Caco-2 (cell line): ENCODE measurements at regions of chr2 and their contacts with region 1.

Region 1: DNA sequence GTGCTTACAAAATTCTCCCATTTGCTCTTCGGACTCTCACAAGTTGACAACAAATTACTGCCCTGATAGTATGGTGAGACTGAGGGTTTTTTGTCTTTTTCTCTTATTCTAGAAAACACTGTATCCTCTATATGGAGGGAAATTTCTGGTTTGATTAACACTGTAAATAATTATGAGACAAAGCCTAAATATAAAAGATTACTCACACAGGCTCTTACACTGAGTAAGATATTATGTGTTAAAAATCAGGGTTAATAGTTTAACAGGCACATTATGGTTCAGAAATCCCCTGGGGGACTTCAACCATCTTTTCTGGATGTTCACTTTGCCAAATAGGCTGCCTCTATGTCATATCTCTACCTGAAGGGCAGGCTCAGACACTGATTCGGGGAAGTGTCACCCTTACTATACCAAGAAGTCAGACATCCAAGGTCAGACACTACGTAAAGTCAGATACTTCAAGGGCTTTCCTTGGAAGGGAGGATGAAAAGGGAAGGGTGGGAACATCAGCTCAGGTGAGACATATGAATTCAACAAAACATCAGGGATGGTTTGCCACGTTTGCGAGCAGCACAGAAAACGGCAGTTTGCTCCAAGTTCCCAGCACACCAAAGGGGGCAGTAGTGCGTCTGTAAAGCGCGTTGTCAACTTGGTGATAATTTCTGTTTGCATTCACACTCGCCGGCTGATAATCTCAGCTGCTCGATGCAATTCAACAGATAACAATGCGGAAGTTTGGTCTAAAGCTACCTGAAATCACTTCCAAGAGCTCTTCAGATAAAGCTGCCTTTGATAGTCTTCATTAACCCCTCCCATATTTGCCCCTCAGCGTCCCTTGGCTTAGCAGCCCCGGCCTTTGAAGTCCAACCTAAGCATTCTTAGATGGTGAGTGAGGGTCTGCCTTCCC is 972 bp upstream of the RASGRP3 start:
- DNase-seq: peak; percentile 87 to 90
- H3K4me3 ChIP-seq: peak overlapping the region; percentile 50
- H3K4me3 Mint-ChIP-seq: peak overlapping the region; percentile 97
- H3K27ac Mint-ChIP-seq: peak overlapping the region; percentile 96
- H3K4me1 ChIP-seq: peaks cover 35% of the 10 kb centered on the region
- H3K4me1 Mint-ChIP-seq: peaks cover 26% of the 10 kb centered on the region
- H3K27me3 ChIP-seq: no peaks in the 10 kb centered on the region
- H3K27me3 Mint-ChIP-seq: no peaks in the 10 kb centered on the region
- CTCF ChIP-seq: peak; percentile 85 to 91

Region 2: DNA sequence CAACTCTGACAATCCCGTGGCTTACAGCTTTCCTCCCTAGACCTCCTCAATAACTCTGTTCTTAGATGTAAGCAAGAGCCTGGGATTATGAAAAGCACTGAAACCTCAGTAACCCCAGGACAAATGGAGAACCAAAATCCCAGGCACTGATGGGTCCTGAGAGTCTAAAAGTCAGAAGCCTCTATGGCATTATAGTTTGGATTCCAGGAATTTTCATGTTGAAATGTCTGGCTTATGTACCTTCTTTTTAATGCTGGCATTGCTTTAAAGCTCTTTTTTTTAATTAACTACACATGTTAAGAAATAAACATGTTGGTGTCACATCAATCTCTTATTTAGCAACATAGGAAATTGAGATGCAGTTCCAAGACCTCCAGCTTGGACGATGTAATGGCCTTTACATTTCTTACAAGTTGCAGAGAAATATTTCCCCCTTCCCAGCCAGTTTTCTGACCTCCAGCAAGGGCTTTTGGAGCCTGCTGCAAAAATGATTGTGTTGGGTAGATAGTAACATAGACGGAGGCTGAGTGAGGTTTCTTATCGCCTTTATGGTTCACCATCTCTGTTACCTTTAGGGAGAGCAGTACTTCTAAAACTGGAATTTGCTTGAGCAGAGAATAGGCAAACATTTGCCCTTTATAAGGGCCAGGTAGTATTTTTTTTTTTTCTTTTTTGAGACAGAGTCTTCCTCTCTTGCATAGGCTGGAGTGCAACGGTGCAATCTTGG is 83.8 kb before region 1 on chr2:
- CTCF ChIA-PET with region 1: no interaction called
- POLR2A ChIA-PET with region 1: no interaction called
- intact Hi-C with region 1: no loop called
- DNase-seq: no peak
- H3K4me3 ChIP-seq: no peak overlapping the region
- H3K4me3 Mint-ChIP-seq: no peak overlapping the region
- H3K27ac Mint-ChIP-seq: no peak overlapping the region
- H3K4me1 ChIP-seq: no peaks in the 10 kb centered on the region
- H3K4me1 Mint-ChIP-seq: no peaks in the 10 kb centered on the region
- H3K27me3 ChIP-seq: no peaks in the 10 kb centered on the region
- H3K27me3 Mint-ChIP-seq: no peaks in the 10 kb centered on the region
- CTCF ChIP-seq: no peak

Region 3: GRCh38 chr2:33412920-33413319 is 62.6 kb before region 1 on chr2:
- CTCF ChIA-PET with region 1: interaction called, 5 read pairs
- POLR2A ChIA-PET with region 1: no interaction called
- intact Hi-C with region 1: loop called (anchors 5 kb)
- DNase-seq: peak in 1 of 2 experiments; percentile 46
- H3K4me3 ChIP-seq: no peak overlapping the region
- H3K4me3 Mint-ChIP-seq: no peak overlapping the region
- H3K27ac Mint-ChIP-seq: no peak overlapping the region
- H3K4me1 ChIP-seq: no peaks in the 10 kb centered on the region
- H3K4me1 Mint-ChIP-seq: no peaks in the 10 kb centered on the region
- H3K27me3 ChIP-seq: no peaks in the 10 kb centered on the region
- H3K27me3 Mint-ChIP-seq: peaks cover 3% of the 10 kb centered on the region
- CTCF ChIP-seq: peak; percentile 30 to 50

Region 4: DNA sequence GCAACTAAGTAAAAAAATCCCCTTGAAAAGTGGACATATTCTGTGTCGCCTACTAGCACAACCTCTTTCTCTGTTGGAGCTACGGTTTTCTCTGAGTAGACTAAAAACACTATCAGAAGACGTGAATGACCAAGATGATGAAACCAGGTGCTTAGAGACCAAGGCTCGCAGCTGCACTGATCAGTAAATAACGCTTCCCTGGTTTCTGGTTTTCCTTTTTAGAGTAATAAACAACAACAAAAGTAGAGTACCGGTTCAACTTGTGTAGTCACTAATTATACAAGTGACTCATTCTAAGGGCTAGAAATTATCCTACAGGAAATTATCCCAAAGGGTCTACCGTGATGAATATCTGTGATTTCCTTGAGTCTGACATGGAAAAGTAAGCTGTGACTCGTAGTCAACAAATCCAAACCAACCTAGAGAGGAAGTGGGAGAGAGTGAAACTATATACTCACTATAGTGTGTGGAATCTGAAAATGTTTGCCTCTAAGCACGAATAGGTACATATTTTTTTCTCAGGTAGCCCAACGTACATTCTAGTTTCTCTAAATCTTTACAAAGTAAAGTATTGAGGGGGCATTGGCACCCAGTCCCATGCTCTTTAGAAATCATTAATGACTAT is 18.8 kb after region 1 on chr2:
- CTCF ChIA-PET with region 1: no interaction called
- POLR2A ChIA-PET with region 1: no interaction called
- intact Hi-C with region 1: loop called (anchors 1 kb)
- DNase-seq: no peak
- H3K4me3 ChIP-seq: no peak overlapping the region
- H3K4me3 Mint-ChIP-seq: no peak overlapping the region
- H3K27ac Mint-ChIP-seq: peak overlapping the region; percentile 17
- H3K4me1 ChIP-seq: peaks cover 28% of the 10 kb centered on the region
- H3K4me1 Mint-ChIP-seq: peaks cover 20% of the 10 kb centered on the region
- H3K27me3 ChIP-seq: no peaks in the 10 kb centered on the region
- H3K27me3 Mint-ChIP-seq: no peaks in the 10 kb centered on the region
- CTCF ChIP-seq: no peak

Region 5: GRCh38 chr2:33559328-33559727 is 83.9 kb after region 1 on chr2:
- CTCF ChIA-PET with region 1: no interaction called
- POLR2A ChIA-PET with region 1: interaction called, 3 read pairs
- intact Hi-C with region 1: loop called (anchors 5 kb)
- DNase-seq: no peak
- H3K4me3 ChIP-seq: no peak overlapping the region
- H3K4me3 Mint-ChIP-seq: no peak overlapping the region
- H3K27ac Mint-ChIP-seq: no peak overlapping the region
- H3K4me1 ChIP-seq: no peaks in the 10 kb centered on the region
- H3K4me1 Mint-ChIP-seq: no peaks in the 10 kb centered on the region
- H3K27me3 ChIP-seq: no peaks in the 10 kb centered on the region
- H3K27me3 Mint-ChIP-seq: no peaks in the 10 kb centered on the region
- CTCF ChIP-seq: no peak

Region 6: GRCh38 chr2:33583194-33583938 is 107.9 kb after region 1 on chr2:
- CTCF ChIA-PET with region 1: interaction called, 13 read pairs
- POLR2A ChIA-PET with region 1: no interaction called
- intact Hi-C with region 1: loop called (anchors 1 kb)
- DNase-seq: peak in 1 of 2 experiments; percentile 44
- H3K4me3 ChIP-seq: no peak overlapping the region
- H3K4me3 Mint-ChIP-seq: no peak overlapping the region
- H3K27ac Mint-ChIP-seq: no peak overlapping the region
- H3K4me1 ChIP-seq: no peaks in the 10 kb centered on the region
- H3K4me1 Mint-ChIP-seq: no peaks in the 10 kb centered on the region
- H3K27me3 ChIP-seq: no peaks in the 10 kb centered on the region
- H3K27me3 Mint-ChIP-seq: no peaks in the 10 kb centered on the region
- CTCF ChIP-seq: peak; percentile 83 to 85

Region 7: GRCh38 chr2:33599175-33599942 is 123.9 kb after region 1 on chr2 and contains the start of gene FAM98A:
- CTCF ChIA-PET with region 1: interaction called, 8 read pairs
- POLR2A ChIA-PET with region 1: interaction called, 7 read pairs
- intact Hi-C with region 1: loop called (anchors 5 kb)
- DNase-seq: peak; percentile 99
- H3K4me3 ChIP-seq: peak within 1 kb of the TSS; percentile 78
- H3K4me3 Mint-ChIP-seq: peak within 1 kb of the TSS; percentile 95
- H3K27ac Mint-ChIP-seq: peak within 1 kb of the TSS; percentile 95
- H3K4me1 ChIP-seq: peaks cover 5% of the 10 kb centered on the region; the same call in 1 of the 2 replicates
- H3K4me1 Mint-ChIP-seq: peaks cover 7% of the 10 kb centered on the region
- H3K27me3 ChIP-seq: no peaks in the 10 kb centered on the region
- H3K27me3 Mint-ChIP-seq: no peaks in the 10 kb centered on the region
- CTCF ChIP-seq: peak in 1 of 2 experiments; percentile 27
- total RNA-seq, gene FAM98A: 53.9 and 60.7 TPM in 2 replicates